Naive thymus-derived CD4-positive, alpha-beta T cell (primary cell): ENCODE measurements at regions of chr3 and their contacts with region 1.

Region 1: GRCh38 chr3:108552267-108553159 is 36.7 kb downstream of the CIP2A start:
- DNase-seq: peak in 7 of 9 donors; percentile 4 to 40 (median 28)
- ATAC-seq: peak; percentile 66
- H3K4me3 ChIP-seq: no peak overlapping the region
- H3K4me3 Mint-ChIP-seq: no peak overlapping the region
- H3K27ac ChIP-seq: no peak overlapping the region
- H3K27ac Mint-ChIP-seq: no peak overlapping the region
- H3K4me1 ChIP-seq: no peaks in the 10 kb centered on the region
- H3K4me1 Mint-ChIP-seq: peaks cover 0 to 12% (median 0%) of the 10 kb centered on the region in 7 donors
- H3K27me3 ChIP-seq: no peaks in the 10 kb centered on the region
- H3K27me3 Mint-ChIP-seq: no peaks in the 10 kb centered on the region

Region 2: DNA sequence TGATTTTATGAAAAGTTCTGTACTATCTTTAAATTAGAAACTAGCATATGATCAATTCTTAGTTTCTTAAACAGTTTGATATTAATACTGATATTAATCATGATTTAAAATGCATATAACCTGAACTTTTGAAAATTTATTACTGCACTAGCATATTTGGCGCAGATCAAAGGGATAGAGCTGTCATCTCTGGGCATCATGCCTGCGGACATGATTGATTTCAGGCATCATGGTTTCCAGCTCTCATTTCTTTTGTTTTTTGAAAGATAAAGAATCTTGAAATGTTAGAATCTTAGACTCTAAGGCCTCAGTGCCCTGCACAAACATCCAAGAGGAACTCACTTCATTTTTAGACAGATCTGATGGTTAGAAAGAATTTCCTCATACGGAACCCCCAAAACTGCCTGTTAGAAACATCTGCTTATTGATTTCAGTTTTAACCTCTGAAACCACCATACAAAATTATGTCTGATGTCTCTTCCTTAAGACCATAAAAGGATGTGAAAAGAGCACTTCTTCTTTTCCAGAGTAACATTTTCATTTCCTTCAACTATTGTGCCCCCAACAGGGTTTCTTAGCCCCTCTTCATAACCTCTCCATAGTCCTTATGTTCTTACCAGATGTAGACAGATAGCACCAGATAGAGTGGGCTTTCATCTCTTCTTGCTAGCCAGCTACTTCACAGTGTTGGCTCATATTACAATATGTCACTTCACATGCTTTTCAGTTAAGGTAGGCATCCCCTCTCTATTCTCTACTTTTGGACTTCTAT is 919.0 kb before region 1 on chr3:
- CTCF ChIA-PET with region 1: no interaction called
- POLR2A ChIA-PET with region 1: no interaction called
- intact Hi-C with region 1: no loop called
- DNase-seq: no peak
- ATAC-seq: peak; percentile 27
- H3K4me3 ChIP-seq: no peak overlapping the region
- H3K4me3 Mint-ChIP-seq: no peak overlapping the region
- H3K27ac ChIP-seq: no peak overlapping the region
- H3K27ac Mint-ChIP-seq: peak overlapping the region in 1 of 9 donors; percentile 32
- H3K4me1 ChIP-seq: peaks cover 0 to 9% of the 10 kb centered on the region in 2 donors
- H3K4me1 Mint-ChIP-seq: peaks cover 25 to 49% (median 40%) of the 10 kb centered on the region in 7 donors
- H3K27me3 ChIP-seq: no peaks in the 10 kb centered on the region
- H3K27me3 Mint-ChIP-seq: no peaks in the 10 kb centered on the region

Region 3: GRCh38 chr3:107753480-107753879 is 799.0 kb before region 1 on chr3:
- CTCF ChIA-PET with region 1: no interaction called
- POLR2A ChIA-PET with region 1: no interaction called
- intact Hi-C with region 1: loop called in 1 of 2 experiments (anchors 10 kb)
- DNase-seq: peak in 3 of 9 donors; percentile 4 to 23 (median 9)
- ATAC-seq: peak; percentile 50
- H3K4me3 ChIP-seq: no peak overlapping the region
- H3K4me3 Mint-ChIP-seq: no peak overlapping the region
- H3K27ac ChIP-seq: no peak overlapping the region
- H3K27ac Mint-ChIP-seq: peak overlapping the region in 1 of 9 donors; percentile 28
- H3K4me1 ChIP-seq: no peaks in the 10 kb centered on the region
- H3K4me1 Mint-ChIP-seq: peaks cover 0 to 11% (median 0%) of the 10 kb centered on the region in 7 donors
- H3K27me3 ChIP-seq: no peaks in the 10 kb centered on the region
- H3K27me3 Mint-ChIP-seq: no peaks in the 10 kb centered on the region

Region 4: GRCh38 chr3:107938143-107938542 is 614.4 kb before region 1 on chr3:
- CTCF ChIA-PET with region 1: no interaction called
- POLR2A ChIA-PET with region 1: no interaction called
- intact Hi-C with region 1: loop called in 1 of 2 experiments (anchors 5 kb)
- DNase-seq: peak in 4 of 9 donors; percentile 6 to 19 (median 8)
- ATAC-seq: no peak
- H3K4me3 ChIP-seq: no peak overlapping the region
- H3K4me3 Mint-ChIP-seq: no peak overlapping the region
- H3K27ac ChIP-seq: no peak overlapping the region
- H3K27ac Mint-ChIP-seq: no peak overlapping the region
- H3K4me1 ChIP-seq: peaks cover 0 to 4% of the 10 kb centered on the region in 2 donors
- H3K4me1 Mint-ChIP-seq: peaks cover 0 to 15% (median 8%) of the 10 kb centered on the region in 7 donors
- H3K27me3 ChIP-seq: no peaks in the 10 kb centered on the region
- H3K27me3 Mint-ChIP-seq: peaks cover 0 to 30% (median 0%) of the 10 kb centered on the region in 5 donors

Region 5: DNA sequence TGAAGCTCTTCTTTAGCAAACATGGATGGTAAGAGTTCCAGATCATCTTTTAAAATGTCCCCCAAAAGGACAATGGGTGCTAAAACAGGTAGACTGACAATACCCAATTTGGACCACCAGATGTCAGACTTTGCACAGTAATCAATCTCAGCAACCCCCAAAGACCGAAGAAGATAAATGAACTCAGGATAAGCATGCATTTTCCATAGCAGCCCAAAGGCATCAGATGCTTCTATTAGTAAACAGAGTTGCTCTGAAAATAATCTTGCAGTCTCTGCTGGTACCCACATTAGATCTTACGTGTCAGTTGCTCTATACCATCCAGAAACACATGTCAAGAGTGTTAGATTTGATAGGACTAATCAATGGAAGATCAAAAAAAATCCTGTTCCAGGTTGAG is 62.7 kb before region 1 on chr3:
- CTCF ChIA-PET with region 1: interaction called, 9 read pairs
- POLR2A ChIA-PET with region 1: no interaction called
- intact Hi-C with region 1: loop called (anchors 1 kb)
- DNase-seq: peak in 7 of 9 donors; percentile 43 to 64 (median 54)
- ATAC-seq: peak; percentile 86
- H3K4me3 ChIP-seq: no peak overlapping the region
- H3K4me3 Mint-ChIP-seq: no peak overlapping the region
- H3K27ac ChIP-seq: no peak overlapping the region
- H3K27ac Mint-ChIP-seq: no peak overlapping the region
- H3K4me1 ChIP-seq: no peaks in the 10 kb centered on the region
- H3K4me1 Mint-ChIP-seq: peaks cover 0 to 3% (median 0%) of the 10 kb centered on the region in 7 donors
- H3K27me3 ChIP-seq: no peaks in the 10 kb centered on the region
- H3K27me3 Mint-ChIP-seq: peaks cover 0 to 13% (median 0%) of the 10 kb centered on the region in 5 donors

Region 6: DNA sequence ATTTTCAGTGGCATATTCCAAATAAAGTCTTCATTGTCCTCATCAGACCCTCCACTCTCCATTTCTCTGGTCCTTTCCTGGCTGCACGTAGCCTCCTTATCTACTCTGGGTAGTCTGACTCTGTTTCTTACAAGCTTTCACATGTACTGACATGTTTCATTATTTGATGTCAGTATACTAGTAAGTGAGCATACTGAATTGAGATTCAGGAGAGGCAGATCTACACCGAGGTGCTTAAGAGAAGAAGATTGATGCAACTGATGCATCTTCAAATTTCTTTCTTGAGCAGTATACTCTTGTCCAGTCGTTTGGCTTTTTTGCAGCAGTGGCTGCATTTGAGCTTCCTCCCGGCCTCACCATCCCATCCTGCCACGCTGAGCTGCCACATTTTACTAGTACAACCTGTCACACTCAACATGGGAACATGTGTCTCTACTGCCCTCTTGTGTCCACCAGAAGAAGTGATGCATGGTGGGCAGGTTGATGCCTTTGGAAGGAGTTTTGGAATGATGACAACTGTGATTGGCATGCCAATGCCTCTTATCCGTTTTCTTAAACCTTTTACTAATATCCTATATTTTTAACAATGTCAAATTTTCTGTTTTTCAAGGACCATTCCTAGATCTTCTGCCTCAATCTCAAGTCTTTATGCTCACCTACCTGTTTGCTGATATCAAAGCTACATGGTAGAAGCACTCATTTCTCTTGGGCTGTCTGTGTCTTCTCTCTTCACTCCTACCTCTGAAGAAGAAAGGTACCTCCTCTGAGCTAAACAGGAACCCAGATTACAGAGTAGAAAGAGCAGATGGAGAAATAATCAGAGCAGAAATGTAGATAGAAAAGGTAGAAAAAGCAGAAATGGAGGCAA is 362.5 kb after region 1 on chr3:
- CTCF ChIA-PET with region 1: interaction called, 6 read pairs
- POLR2A ChIA-PET with region 1: no interaction called
- intact Hi-C with region 1: loop called (anchors 1 to 2 kb)
- DNase-seq: peak; percentile 17 to 82 (median 71)
- ATAC-seq: peak; percentile 94
- H3K4me3 ChIP-seq: no peak overlapping the region
- H3K4me3 Mint-ChIP-seq: peak overlapping the region; percentile 43 to 72 (median 66)
- H3K27ac ChIP-seq: no peak overlapping the region
- H3K27ac Mint-ChIP-seq: peak overlapping the region in 6 of 9 donors; percentile 11 to 60 (median 32)
- H3K4me1 ChIP-seq: peaks cover 5 to 9% of the 10 kb centered on the region in 2 donors
- H3K4me1 Mint-ChIP-seq: peaks cover 12 to 21% (median 18%) of the 10 kb centered on the region in 7 donors
- H3K27me3 ChIP-seq: no peaks in the 10 kb centered on the region
- H3K27me3 Mint-ChIP-seq: peaks cover 0 to 33% (median 0%) of the 10 kb centered on the region in 5 donors